ENCODE measurements at regions of chr1 and their contacts with region 1.

Region 1: DNA sequence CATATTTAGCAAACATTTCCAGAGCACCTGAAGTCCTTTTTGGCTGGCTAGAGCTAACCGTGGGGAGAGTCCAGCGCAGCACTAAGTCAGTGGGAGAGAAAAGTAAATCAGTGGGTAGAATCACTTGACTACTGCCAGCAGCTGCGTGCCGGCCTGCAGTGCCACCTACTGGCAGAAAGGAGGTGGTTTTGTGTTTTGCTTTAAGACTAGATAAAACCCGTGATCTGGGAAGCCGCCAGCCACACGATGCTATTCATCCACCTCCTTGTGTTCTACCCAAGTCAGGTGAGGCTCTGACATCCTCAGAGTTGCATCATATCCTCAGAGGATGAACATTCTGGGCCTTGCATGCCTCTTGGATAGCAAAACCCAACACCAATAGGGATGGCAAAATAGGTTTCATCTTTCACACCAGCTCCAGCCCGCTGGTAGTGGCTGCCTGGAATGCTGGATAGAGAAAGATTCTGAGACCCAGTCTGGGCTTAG is 14.1 kb upstream of the HEYL start:
- DNase-seq: peak; percentile 85
- ATAC-seq: peak; percentile 80
- H3K4me3 Mint-ChIP-seq: no peak overlapping the region
- H3K27ac Mint-ChIP-seq: no peak overlapping the region
- H3K4me1 Mint-ChIP-seq: peaks cover 12% of the 10 kb centered on the region
- H3K27me3 Mint-ChIP-seq: peaks cover 5% of the 10 kb centered on the region

Region 2: DNA sequence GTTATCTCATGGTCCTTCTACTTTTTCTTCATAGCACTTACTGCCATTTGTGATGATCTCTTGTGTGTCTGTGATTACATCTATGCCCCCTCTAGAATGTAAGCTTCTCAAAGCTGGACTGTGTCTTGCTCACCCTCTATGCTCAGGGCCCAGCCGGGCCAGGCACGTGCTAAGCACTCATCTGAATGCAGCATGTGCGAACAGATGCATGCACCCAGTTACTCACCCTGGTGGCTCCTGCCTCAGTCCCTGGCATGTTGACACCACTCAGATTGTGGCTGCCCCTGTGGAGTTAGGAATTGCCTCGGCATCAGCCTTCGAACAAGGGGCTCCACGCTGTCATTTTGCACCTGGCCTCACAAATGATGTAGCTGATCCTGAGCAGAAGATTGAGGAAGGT is 57.4 kb before region 1 on chr1:
- CTCF ChIA-PET with region 1: interaction called, 10 read pairs
- DNase-seq: no peak
- ATAC-seq: no peak
- H3K4me3 Mint-ChIP-seq: no peak overlapping the region
- H3K27ac Mint-ChIP-seq: no peak overlapping the region
- H3K4me1 Mint-ChIP-seq: peaks cover 8% of the 10 kb centered on the region
- H3K27me3 Mint-ChIP-seq: no peaks in the 10 kb centered on the region

Region 3: GRCh38 chr1:39639305-39640130 is 14.1 kb before region 1 on chr1 and contains the start of gene HEYL:
- CTCF ChIA-PET with region 1: interaction called, 23 read pairs
- DNase-seq: peak; percentile 64
- ATAC-seq: peak; percentile 94
- H3K4me3 Mint-ChIP-seq: peak within 1 kb of the TSS; percentile 25
- H3K27ac Mint-ChIP-seq: no peak within 1 kb of the TSS
- H3K4me1 Mint-ChIP-seq: no peaks in the 10 kb centered on the region
- H3K27me3 Mint-ChIP-seq: peaks cover 59% of the 10 kb centered on the region
- total RNA-seq, gene HEYL: not detected

Region 4: DNA sequence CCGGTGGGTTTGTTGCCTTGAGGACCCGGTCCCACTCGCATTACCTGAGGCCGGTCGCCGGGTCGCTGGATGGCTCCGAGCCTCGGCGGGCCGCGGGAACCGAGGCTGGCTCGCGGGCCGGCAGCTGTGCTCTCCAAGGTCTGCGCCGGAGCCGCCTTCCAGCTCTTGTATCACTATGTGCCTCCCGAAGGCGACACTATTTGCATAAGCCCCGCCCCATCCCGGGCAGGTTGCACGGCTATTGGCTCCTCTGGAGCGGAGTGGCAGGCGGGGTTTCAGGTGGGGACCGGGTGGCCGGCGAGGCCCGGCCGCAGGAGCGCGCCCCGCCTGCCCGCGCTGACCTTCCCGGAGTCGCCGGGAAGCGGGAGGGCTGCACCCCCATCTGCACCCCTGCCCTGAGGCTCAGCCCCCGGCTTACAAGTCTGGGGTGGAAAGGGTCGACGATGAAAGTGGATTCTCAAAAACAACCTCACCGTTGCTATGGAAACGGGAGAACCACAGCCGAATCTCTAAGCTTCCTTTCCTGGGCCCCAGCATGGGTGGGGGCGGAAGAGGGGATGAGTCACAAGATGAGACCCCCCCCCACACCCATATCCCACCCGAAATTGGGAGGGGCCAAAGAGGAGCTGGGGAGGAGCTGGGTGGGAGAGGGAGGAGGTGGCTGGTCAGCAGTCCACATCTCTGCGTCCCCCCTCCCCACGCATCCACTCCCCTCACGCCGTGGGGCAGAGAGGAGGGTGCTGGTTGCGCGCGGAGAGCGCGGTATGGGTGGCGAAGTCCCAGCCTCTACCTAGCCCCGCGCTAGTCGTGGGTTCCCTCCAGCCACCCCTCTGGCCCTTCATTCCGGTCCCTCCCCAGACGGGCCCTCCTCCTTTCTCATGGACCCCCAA is 37.9 kb after region 1 on chr1 and contains the start of gene HPCAL4:
- CTCF ChIA-PET with region 1: interaction called, 19 read pairs
- DNase-seq: peak; percentile 93
- ATAC-seq: peak; percentile 99
- H3K4me3 Mint-ChIP-seq: peak within 1 kb of the TSS; percentile 40
- H3K27ac Mint-ChIP-seq: no peak within 1 kb of the TSS
- H3K4me1 Mint-ChIP-seq: peaks cover 16% of the 10 kb centered on the region
- H3K27me3 Mint-ChIP-seq: peaks cover 62% of the 10 kb centered on the region
- total RNA-seq, gene HPCAL4: 0.18 to 0.30 TPM

Region 5: DNA sequence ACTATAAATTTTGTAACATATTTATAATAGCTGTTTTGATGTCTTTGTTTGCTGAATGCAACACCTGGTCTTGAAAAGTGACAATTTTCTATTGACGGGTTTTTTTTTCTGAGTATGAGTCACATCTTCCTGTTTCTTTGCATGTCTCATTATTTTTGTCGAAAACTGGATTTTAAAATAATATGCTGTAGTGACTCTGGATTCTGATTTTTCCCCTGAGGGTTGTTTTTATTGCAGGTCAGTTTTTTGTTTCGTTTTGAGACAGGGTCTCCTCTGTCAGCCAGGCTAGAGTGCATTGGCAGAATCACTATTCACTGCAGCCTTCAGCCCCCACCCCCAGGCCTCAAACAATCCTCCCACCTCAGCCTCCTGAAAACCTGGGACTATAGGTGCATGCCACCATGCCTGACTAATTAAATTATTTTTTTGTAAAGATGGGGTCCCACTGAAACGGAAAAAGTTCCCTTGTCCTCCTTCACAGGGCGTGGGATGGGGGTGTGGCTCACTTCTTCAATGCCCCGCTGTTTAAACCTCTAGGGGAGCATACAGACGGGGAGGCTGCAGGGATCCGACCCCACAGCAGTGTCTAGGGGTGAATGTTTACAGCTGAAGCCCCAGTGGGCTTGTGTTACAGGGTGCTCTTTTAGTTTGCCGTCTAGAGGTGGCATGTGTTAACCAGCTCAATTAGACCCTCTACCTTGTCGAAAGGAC is 73.8 kb after region 1 on chr1:
- CTCF ChIA-PET with region 1: interaction called, 11 read pairs
- DNase-seq: no peak
- ATAC-seq: peak; percentile 36
- H3K4me3 Mint-ChIP-seq: no peak overlapping the region
- H3K27ac Mint-ChIP-seq: no peak overlapping the region
- H3K4me1 Mint-ChIP-seq: peaks cover 21% of the 10 kb centered on the region
- H3K27me3 Mint-ChIP-seq: peaks cover 72% of the 10 kb centered on the region